Caco-2 (cell line): ENCODE measurements at regions of chr5 and their contacts with region 1.

Region 1: GRCh38 chr5:33423018-33423630 is 17.6 kb upstream of the TARS1 start:
- DNase-seq: peak in 1 of 2 experiments; percentile 11
- H3K4me3 ChIP-seq: no peak overlapping the region
- H3K4me3 Mint-ChIP-seq: no peak overlapping the region
- H3K27ac Mint-ChIP-seq: no peak overlapping the region
- H3K4me1 ChIP-seq: no peaks in the 10 kb centered on the region
- H3K4me1 Mint-ChIP-seq: no peaks in the 10 kb centered on the region
- H3K27me3 ChIP-seq: no peaks in the 10 kb centered on the region
- H3K27me3 Mint-ChIP-seq: peaks cover 20% of the 10 kb centered on the region
- CTCF ChIP-seq: peak; percentile 37 to 40

Region 2: GRCh38 chr5:32690153-32690552 is 733.0 kb before region 1 on chr5:
- CTCF ChIA-PET with region 1: no interaction called
- POLR2A ChIA-PET with region 1: no interaction called
- intact Hi-C with region 1: loop called (anchors 2 kb)
- DNase-seq: peak in 1 of 2 experiments; percentile 13
- H3K4me3 ChIP-seq: no peak overlapping the region
- H3K4me3 Mint-ChIP-seq: no peak overlapping the region
- H3K27ac Mint-ChIP-seq: no peak overlapping the region
- H3K4me1 ChIP-seq: no peaks in the 10 kb centered on the region
- H3K4me1 Mint-ChIP-seq: peaks cover 5% of the 10 kb centered on the region
- H3K27me3 ChIP-seq: no peaks in the 10 kb centered on the region
- H3K27me3 Mint-ChIP-seq: peaks cover 12% of the 10 kb centered on the region
- CTCF ChIP-seq: peak; percentile 21 to 44

Region 3: DNA sequence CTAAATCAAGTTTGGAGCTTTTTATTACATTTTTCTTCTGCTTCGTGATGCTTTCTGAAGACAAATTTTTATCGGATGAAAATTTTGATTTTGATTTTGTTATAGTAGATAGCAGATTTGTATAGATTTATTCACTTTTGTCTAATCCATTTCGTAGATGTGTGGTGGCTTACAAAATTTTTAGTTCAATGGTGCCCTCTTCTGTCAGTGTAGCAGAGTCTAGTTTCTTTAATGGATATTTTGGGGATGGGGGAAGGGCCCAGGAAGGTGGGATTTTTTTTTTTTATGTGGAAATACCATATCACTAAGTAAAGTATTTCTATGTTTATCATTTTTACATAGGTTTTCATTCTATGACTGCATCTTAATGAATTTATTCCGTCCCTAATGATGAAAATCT is 242.2 kb before region 1 on chr5:
- CTCF ChIA-PET with region 1: no interaction called
- POLR2A ChIA-PET with region 1: no interaction called
- intact Hi-C with region 1: loop called (anchors 10 kb)
- DNase-seq: peak in 1 of 2 experiments; percentile 14
- H3K4me3 ChIP-seq: no peak overlapping the region
- H3K4me3 Mint-ChIP-seq: no peak overlapping the region
- H3K27ac Mint-ChIP-seq: no peak overlapping the region
- H3K4me1 ChIP-seq: no peaks in the 10 kb centered on the region
- H3K4me1 Mint-ChIP-seq: peaks cover 7% of the 10 kb centered on the region
- H3K27me3 ChIP-seq: no peaks in the 10 kb centered on the region
- H3K27me3 Mint-ChIP-seq: peaks cover 7% of the 10 kb centered on the region
- CTCF ChIP-seq: peak; percentile 10 to 27

Region 4: GRCh38 chr5:33299621-33300208 is 123.4 kb before region 1 on chr5:
- CTCF ChIA-PET with region 1: no interaction called
- POLR2A ChIA-PET with region 1: no interaction called
- intact Hi-C with region 1: loop called (anchors 2 kb)
- DNase-seq: peak in 1 of 2 experiments; percentile 4
- H3K4me3 ChIP-seq: no peak overlapping the region
- H3K4me3 Mint-ChIP-seq: no peak overlapping the region
- H3K27ac Mint-ChIP-seq: no peak overlapping the region
- H3K4me1 ChIP-seq: peaks cover 21% of the 10 kb centered on the region
- H3K4me1 Mint-ChIP-seq: peaks cover 8% of the 10 kb centered on the region
- H3K27me3 ChIP-seq: no peaks in the 10 kb centered on the region
- H3K27me3 Mint-ChIP-seq: peaks cover 2% of the 10 kb centered on the region
- CTCF ChIP-seq: peak; percentile 29 to 45